ENCODE measurements at regions of chr9 and their contacts with region 1.

Region 1: GRCh38 chr9:136539427-136540421 is 6.1 kb downstream of the NOTCH1 start:
- DNase-seq: peak; percentile 96
- H3K4me3 ChIP-seq: peak overlapping the region; percentile 4 to 29 (median 14)
- H3K27ac ChIP-seq: peak overlapping the region; percentile 80 to 100 (median 96)
- H3K4me1 ChIP-seq: peaks cover 0 to 93% (median 90%) of the 10 kb centered on the region in 4 donors
- H3K27me3 ChIP-seq: no peaks in the 10 kb centered on the region
- CTCF ChIP-seq: no peak
- EP300 ChIP-seq: peak in 1 of 4 donors; percentile 48
- POLR2A ChIP-seq: peak in 1 of 2 donors; percentile 51

Region 2: DNA sequence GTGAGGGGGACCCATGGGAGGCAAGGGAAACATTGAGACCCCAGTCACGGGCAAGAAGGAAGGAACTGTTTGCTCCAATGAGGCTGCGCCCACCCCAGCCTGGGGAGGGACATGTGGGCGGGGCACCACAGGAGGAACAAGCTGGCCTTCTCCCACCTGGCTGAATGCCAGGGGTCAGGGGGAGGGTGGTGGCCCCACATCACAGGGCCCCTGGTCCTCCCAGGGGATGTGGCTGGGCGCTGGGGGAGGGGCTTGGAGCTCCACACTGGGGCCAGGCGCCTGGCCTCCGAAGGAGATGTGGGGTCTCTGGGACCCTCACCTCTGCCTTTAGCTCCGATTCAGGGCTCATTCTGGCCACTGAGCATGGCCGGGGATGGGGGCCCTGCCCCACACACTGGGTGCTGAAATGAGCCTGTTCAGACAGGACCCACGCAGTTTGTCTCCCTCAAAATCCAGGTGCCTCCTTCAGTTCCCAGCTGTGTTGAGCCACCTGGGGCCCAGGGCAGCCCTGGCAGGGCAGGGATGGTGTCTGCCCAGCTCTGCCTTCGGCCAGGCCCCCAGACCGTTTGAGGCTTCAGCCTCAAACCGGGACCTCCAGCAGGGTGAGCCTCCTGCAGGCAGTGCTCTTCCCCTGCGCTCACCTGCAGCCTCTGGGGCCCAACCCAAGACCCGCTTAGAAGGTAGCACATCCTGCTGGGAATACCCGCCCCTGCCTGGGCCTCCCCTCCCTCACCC is 39.4 kb after region 1 on chr9:
- intact Hi-C with region 1: loop called (anchors 5 kb)
- DNase-seq: no peak
- H3K4me3 ChIP-seq: no peak overlapping the region
- H3K27ac ChIP-seq: no peak overlapping the region
- H3K4me1 ChIP-seq: peaks cover 0 to 18% (median 14%) of the 10 kb centered on the region in 4 donors
- H3K27me3 ChIP-seq: no peaks in the 10 kb centered on the region
- CTCF ChIP-seq: no peak
- EP300 ChIP-seq: no peak
- POLR2A ChIP-seq: no peak

Region 3: GRCh38 chr9:136631038-136632000 is 91.6 kb after region 1 on chr9:
- intact Hi-C with region 1: loop called (anchors 5 kb)
- DNase-seq: peak; percentile 88
- H3K4me3 ChIP-seq: no peak overlapping the region
- H3K27ac ChIP-seq: no peak overlapping the region
- H3K4me1 ChIP-seq: peaks cover 0 to 10% (median 4%) of the 10 kb centered on the region in 4 donors
- H3K27me3 ChIP-seq: peaks cover 0 to 5% (median 0%) of the 10 kb centered on the region in 3 donors
- CTCF ChIP-seq: peak; percentile 76 to 94 (median 89)
- EP300 ChIP-seq: no peak
- POLR2A ChIP-seq: no peak